ENCODE measurements at regions of chr1 and their contacts with region 1.

Region 1: GRCh38 chr1:52296345-52296744 is 69.7 kb downstream of the CC2D1B start:
- DNase-seq: peak; percentile 66
- CTCF ChIP-seq: peak; percentile 65

Region 2: DNA sequence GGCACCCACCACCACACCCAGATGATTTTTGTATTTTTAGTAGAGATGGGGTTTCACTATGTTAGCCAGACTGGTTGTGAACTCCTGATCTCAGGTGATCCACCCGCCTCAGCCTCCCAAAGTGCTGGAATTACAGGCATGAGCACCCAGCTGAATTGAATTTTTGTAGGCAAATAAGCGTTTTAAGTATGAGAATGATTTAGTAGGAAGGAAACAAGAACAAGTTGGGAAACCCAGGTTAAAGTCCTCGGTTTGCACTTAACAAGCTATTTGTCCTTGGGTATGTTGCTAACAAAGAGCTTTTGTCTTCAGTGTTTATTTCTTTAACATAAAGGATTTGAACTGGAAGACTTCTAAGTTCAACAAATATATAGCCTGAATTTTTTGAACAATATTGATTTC is 216.3 kb before region 1 on chr1:
- CTCF ChIA-PET with region 1: interaction called, 3 read pairs
- POLR2A ChIA-PET with region 1: interaction called, 12 read pairs
- DNase-seq: no peak
- CTCF ChIP-seq: no peak

Region 3: DNA sequence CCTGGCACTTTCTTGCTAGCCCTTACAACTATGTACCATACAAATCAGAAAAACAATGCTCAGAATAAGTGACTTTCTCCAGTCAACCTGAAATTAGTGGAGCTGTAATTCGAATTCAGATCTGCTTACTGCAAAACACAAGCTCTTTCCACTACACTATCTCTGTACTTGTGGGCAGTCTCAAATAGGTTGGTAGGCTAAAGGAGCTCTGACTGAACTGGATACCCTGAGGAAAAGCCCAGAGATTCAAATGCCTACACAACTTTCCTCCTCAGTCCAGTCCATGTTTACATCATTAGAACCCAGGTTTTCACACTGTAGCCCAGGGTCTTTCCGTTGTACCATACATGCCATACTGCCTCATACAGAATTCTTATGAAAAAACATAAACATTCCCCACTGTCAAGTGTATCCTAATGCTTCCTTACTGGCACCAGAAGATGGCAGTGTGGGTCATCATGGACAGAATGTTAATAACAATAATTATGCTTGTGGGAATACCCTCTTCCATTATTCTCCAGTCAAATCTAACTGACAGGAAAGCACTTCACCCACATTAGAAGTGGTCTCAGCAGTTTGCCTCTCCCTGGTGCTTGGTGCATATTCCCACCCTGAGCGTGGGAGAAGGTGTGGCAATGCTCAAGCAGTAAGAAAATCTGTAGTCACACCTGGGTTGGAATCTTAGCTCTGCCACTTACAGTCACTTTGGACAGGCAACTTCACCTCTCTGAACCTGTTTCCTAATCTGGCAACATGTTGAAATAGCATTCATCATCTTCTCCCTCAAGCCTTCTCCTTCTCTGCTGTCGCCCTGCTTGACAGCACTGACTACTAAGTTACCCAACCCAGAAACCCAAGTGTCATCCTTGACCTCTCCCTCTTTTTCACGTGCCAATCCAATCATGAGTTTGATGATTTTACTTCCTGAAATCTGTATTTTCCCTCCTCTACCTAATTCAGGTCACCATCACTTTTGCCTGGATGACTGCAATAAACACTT is 168.9 kb before region 1 on chr1:
- CTCF ChIA-PET with region 1: interaction called, 15 read pairs
- POLR2A ChIA-PET with region 1: no interaction called
- DNase-seq: no peak
- CTCF ChIP-seq: peak; percentile 65

Region 4: GRCh38 chr1:52306227-52307006 is 10.1 kb after region 1 on chr1:
- CTCF ChIA-PET with region 1: interaction called, 22 read pairs
- POLR2A ChIA-PET with region 1: no interaction called
- DNase-seq: no peak
- CTCF ChIP-seq: no peak